Heart left ventricle (tissue), 16 donors: ENCODE measurements at regions of chr1 and their contacts with region 1.

Region 1: DNA sequence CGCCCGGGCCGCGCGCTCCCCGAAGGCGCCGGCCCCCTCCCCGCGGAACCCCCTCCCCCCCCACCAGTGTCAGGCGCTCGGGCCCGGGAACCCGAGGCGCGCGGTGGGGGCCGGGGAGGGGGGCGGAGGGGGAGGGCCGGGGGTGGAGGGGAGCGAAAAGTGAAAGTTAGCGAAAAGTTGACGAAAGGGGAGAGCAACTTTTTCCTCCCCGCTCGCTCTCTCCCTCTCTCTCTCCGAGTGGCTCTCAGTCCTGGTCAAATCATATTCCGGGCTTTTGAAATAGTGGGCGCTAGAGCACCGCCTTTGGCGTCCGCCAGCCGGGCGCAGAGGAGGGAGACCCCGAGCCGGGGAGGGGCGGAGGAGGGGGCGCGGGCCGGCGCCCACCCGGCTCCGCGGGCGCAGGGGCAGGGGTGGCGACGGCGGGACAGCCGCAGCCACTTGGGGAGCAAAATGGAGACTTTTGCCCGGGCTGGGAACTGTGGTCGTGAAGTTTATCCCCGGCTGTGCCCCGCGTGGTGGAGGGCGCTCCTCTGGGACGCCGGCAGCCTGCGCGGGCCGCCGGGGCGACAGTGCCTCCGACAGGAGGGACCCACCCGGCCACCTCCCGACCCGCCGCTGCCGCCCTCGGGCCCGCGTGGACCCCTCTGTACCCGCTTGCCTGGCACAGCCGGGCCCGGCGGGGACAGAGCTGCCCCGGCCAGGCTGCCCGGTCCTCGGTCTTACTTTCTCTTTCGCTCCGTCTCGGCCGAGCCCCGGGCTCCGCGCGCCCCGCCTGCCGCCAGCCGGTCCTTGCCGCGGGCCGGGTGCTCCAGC is 694 bp downstream of the PRDM16 start:
- DNase-seq: peak in 4 of 5 donors; percentile 59 to 69 (median 63)
- ATAC-seq: peak in 3 of 4 donors; percentile 30 to 42 (median 34)
- H3K4me3 ChIP-seq: peak overlapping the region; percentile 70 to 98 (median 87)
- H3K27ac ChIP-seq: peak overlapping the region; percentile 78 to 99 (median 90)
- H3K4me1 ChIP-seq: peaks cover 0 to 84% (median 19%) of the 10 kb centered on the region in 12 donors
- H3K27me3 ChIP-seq: peaks cover 8 to 90% (median 38%) of the 10 kb centered on the region in 9 donors
- CTCF ChIP-seq: peak in 11 of 12 donors; percentile 14 to 67 (median 47)
- POLR2A ChIP-seq: no peak

Region 2: DNA sequence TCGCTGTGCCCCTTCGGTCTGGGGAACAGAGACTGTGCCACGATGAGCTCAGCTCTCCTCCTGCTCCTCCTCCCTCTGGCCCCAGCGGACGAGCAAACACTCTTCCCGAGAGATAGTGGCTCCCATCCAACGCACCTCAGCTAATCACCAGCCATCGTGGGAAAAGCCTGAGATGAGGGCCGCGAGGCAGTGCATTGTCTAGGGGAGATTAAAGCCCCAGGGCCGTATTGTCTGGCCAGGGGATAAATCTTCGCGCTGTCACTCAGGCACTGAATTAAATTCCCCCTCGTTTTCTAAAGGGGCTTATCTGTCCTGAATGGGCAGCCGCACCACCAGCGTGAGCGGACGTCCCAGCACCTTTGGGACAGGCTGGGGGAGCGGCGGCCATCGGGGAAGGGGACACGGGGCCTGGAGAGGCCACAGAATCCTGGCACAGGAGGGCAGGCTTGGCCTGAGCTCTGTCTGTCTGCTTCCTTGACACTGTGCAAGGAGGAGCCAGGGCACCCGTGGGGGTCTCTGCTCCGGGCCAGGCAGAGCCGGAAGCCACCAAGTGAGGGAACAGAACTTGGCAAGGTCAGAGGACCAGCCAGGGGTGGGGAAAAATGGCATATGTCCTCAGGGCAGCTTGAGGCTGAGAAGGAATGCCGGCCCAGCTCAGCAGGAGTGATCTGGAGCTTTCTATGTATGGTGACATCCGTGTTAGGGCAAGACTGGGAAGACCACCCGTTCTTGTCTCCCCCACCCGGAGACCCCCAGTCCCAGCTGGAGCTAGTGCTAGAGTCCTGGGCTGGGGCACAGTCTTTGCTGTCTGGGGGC is 31.6 kb after region 1 on chr1:
- intact Hi-C with region 1: no loop called
- DNase-seq: no peak
- ATAC-seq: peak in 3 of 4 donors; percentile 3 to 45 (median 24)
- H3K4me3 ChIP-seq: no peak overlapping the region
- H3K27ac ChIP-seq: peak overlapping the region in 3 of 12 donors; percentile 38 to 73 (median 48)
- H3K4me1 ChIP-seq: peaks cover 0 to 76% (median 22%) of the 10 kb centered on the region in 12 donors
- H3K27me3 ChIP-seq: peaks cover 0 to 4% (median 0%) of the 10 kb centered on the region in 9 donors
- CTCF ChIP-seq: peak in 2 of 12 donors; percentile 9 to 17
- POLR2A ChIP-seq: no peak

Region 3: DNA sequence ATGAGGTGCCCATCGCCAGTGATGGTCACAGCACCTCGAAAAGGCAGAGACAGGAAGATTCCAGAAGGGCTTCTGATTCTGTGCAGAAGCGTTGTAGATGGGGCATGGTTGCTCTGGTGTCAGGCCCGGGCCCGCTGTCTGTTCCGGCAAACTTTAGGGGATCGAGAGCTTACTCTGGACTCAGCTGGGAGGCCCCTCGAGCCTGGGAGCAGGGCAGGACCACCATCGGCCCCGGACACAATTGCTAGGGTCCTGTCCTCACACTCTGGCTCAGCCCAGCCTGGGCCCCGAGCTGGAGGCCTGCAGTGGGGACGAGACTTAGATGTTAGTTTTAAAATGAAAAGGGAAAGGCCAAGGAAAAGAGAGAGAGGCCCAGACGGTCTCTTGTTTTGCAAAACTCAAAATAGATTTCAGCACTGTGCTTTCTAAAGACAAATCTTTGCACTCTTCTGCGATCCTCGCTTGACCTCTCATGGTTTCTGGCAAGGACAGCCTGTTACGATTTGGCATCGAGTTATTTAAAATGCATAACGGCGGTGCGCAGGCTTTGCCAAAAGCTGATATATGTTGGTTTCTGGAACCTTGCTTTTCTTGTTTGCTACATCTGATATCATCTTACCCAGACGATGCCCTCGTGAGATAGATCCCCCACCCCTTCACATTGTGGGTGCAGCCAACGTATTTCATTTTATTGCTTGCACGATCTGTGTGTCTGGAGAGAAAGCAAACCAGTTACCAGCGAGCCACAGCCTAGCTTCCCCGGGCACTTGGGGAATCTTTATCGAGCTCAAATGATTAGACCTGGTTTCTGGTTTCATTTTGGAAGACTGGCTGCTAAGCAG is 57.3 kb after region 1 on chr1:
- intact Hi-C with region 1: loop called in 3 of 10 experiments (anchors 5 to 10 kb)
- DNase-seq: no peak
- ATAC-seq: peak; percentile 14 to 46 (median 36)
- H3K4me3 ChIP-seq: peak overlapping the region in 3 of 12 donors; percentile 6 to 21 (median 14)
- H3K27ac ChIP-seq: peak overlapping the region; percentile 55 to 89 (median 74)
- H3K4me1 ChIP-seq: peaks cover 6 to 84% (median 46%) of the 10 kb centered on the region in 12 donors
- H3K27me3 ChIP-seq: no peaks in the 10 kb centered on the region
- CTCF ChIP-seq: no peak
- POLR2A ChIP-seq: no peak

Region 4: DNA sequence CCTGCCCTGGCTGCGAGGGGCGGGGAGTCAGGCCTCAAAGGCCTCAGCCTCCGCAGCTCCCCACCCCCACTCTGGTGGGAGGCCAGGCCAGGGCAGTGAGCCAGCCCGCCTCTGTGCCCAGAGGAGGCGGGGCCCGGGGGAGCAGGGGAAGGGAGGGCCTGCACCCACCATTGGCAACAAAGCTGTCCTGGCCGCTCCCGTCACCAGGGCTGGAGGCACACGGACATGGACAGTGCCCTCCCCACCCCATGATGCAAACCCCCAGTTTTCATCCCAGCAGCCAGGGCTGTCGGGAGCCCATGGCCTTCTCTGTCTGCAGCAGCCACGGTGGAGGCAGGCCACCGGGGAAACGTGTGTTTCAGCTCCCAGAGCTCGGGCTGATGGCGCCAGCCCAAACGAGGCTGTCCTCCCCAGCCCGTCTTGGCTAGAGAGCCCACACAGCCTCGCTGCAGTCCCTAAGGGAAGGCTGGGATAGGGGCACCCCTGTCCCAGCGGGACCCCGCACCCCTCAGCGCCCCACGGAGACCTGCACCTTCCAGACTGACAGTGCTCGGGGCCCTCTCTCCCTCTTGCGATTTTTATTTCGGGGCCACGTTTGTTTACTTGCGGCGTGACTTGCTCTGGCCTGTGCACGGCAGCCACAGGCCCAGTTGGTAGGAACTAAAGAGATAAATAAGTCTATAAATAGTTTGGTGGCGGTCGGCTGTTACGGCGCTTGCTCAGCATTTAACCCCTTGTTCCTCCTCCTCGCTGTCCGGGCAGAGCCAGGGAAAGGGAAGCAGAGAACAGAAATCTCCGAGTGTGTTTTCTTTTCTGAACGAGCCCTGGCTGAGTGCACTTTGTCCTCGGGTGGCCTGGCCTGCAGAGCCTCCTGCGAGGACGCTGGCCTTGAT is 101.1 kb after region 1 on chr1:
- intact Hi-C with region 1: loop called in 3 of 10 experiments (anchors 5 to 10 kb)
- DNase-seq: peak; percentile 85 to 92 (median 85)
- ATAC-seq: peak; percentile 82 to 92 (median 87)
- H3K4me3 ChIP-seq: peak overlapping the region in 11 of 12 donors; percentile 22 to 58 (median 44)
- H3K27ac ChIP-seq: peak overlapping the region; percentile 71 to 98 (median 89)
- H3K4me1 ChIP-seq: peaks cover 7 to 73% (median 53%) of the 10 kb centered on the region in 12 donors
- H3K27me3 ChIP-seq: peaks cover 0 to 4% (median 0%) of the 10 kb centered on the region in 9 donors
- CTCF ChIP-seq: no peak
- POLR2A ChIP-seq: no peak

Region 5: GRCh38 chr1:3283849-3284248 is 214.2 kb after region 1 on chr1:
- intact Hi-C with region 1: loop called in 9 of 10 experiments (anchors 1 to 5 kb)
- DNase-seq: peak in 4 of 5 donors; percentile 44 to 58 (median 55)
- ATAC-seq: peak; percentile 58 to 82 (median 73)
- H3K4me3 ChIP-seq: peak overlapping the region in 3 of 12 donors; percentile 16 to 25 (median 20)
- H3K27ac ChIP-seq: peak overlapping the region in 8 of 12 donors; percentile 31 to 61 (median 58)
- H3K4me1 ChIP-seq: peaks cover 0 to 28% (median 4%) of the 10 kb centered on the region in 12 donors
- H3K27me3 ChIP-seq: peaks cover 0 to 13% (median 0%) of the 10 kb centered on the region in 9 donors
- CTCF ChIP-seq: peak; percentile 43 to 83 (median 75)
- POLR2A ChIP-seq: no peak

Region 6: DNA sequence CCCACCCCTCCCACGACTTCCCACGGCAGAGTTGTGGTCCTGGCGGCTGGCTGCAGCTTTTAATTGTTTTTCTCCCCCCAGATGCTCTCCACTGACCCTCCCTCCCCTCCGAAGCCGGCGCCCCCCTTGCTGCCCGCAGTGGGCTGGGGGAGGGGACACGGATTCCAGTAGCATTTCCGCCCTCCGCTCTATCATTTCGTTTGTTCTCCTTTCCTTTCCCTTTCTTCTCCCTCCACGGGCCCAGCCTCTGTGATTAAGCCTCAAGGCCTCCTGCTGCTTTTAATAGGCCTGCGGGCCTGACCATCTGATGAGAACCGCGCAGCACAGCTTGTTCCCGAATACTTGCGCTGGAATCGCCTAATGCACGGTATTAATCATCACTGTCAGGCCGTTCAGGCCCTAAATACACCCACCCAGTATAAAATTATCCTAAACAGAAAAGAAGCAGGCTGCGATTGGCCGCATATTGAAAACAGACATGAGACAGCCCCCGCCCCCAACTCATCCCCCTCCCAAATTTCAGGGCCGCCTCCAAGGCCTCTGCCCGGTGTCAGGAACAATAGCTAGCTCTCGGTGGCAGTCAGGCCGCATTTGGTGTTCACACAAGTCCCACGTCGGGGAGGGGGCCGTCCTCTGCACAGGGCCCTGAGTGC is 282.7 kb after region 1 on chr1:
- intact Hi-C with region 1: loop called in 4 of 10 experiments (anchors 1 to 5 kb)
- DNase-seq: peak in 2 of 5 donors; percentile 53 to 84
- ATAC-seq: peak in 2 of 4 donors; percentile 2 to 18
- H3K4me3 ChIP-seq: no peak overlapping the region
- H3K27ac ChIP-seq: peak overlapping the region; percentile 60 to 98 (median 90)
- H3K4me1 ChIP-seq: peaks cover 0 to 87% (median 52%) of the 10 kb centered on the region in 12 donors
- H3K27me3 ChIP-seq: peaks cover 0 to 20% (median 0%) of the 10 kb centered on the region in 9 donors
- CTCF ChIP-seq: no peak
- POLR2A ChIP-seq: peak in 1 of 2 donors; percentile 18

Region 7: GRCh38 chr1:3410142-3410925 is 340.6 kb after region 1 on chr1:
- intact Hi-C with region 1: loop called in 5 of 10 experiments (anchors 1 to 5 kb)
- DNase-seq: peak in 4 of 5 donors; percentile 64 to 78 (median 67)
- ATAC-seq: peak; percentile 73 to 90 (median 81)
- H3K4me3 ChIP-seq: no peak overlapping the region
- H3K27ac ChIP-seq: peak overlapping the region in 1 of 12 donors; percentile 11
- H3K4me1 ChIP-seq: peaks cover 0 to 26% (median 5%) of the 10 kb centered on the region in 12 donors
- H3K27me3 ChIP-seq: no peaks in the 10 kb centered on the region
- CTCF ChIP-seq: peak; percentile 44 to 81 (median 70)
- POLR2A ChIP-seq: no peak